Heart right ventricle (tissue), 16 donors: ENCODE measurements at regions of chr12 and their contacts with region 1.

Region 1: DNA sequence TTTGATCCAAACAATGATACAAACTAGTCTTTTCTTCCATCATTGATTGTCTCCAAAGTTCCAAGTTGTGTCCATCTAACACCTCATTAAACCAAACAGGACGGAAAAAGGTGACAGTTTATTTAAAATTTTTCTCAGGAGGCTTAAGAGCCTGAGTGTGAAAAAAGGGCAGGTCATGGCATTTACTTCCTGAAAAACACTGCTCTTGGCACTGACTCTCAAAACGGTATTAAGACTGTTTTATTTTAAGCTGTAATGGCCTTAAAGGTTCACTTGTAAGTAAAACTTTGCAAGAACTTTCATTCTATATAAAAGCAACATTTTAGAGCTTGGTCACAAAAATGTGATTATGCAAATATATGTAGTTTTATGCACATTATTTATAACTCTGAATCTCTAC is 222.5 kb downstream of the SLC2A13 start:
- DNase-seq: no peak
- ATAC-seq: no peak
- H3K4me3 ChIP-seq: no peak overlapping the region
- H3K27ac ChIP-seq: no peak overlapping the region
- H3K4me1 ChIP-seq: no peaks in the 10 kb centered on the region
- H3K27me3 ChIP-seq: no peaks in the 10 kb centered on the region
- CTCF ChIP-seq: no peak

Region 2: DNA sequence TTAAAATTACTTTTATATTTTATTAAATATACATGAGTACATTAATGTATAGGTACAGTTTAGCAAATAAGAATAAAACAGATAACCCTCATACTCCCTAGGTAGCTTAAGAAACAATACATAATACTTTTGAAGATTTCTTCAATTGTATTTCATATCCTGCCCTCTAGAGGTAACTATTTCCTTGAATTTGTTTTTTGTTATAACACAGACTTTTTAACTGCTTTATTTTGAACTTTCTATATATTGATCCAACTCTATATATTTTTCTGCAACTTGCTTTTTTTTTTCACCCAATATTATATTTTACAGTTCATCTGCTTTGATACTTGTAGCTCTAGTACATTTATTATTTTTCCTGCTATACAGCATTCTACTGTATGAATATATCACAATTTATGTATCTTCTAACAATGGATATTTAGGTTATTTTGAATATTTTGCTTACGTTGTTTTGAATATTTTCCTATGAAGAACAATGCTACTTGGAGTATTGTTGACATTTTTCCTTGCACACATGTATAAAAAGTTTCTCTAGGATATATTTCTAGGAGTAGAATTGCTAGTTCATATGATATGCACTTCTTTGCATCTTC is 191.1 kb before region 1 on chr12:
- intact Hi-C with region 1: no loop called
- DNase-seq: no peak
- ATAC-seq: no peak
- H3K4me3 ChIP-seq: no peak overlapping the region
- H3K27ac ChIP-seq: no peak overlapping the region
- H3K4me1 ChIP-seq: no peaks in the 10 kb centered on the region
- H3K27me3 ChIP-seq: no peaks in the 10 kb centered on the region
- CTCF ChIP-seq: peak in 8 of 9 donors; percentile 12 to 62 (median 41)

Region 3: DNA sequence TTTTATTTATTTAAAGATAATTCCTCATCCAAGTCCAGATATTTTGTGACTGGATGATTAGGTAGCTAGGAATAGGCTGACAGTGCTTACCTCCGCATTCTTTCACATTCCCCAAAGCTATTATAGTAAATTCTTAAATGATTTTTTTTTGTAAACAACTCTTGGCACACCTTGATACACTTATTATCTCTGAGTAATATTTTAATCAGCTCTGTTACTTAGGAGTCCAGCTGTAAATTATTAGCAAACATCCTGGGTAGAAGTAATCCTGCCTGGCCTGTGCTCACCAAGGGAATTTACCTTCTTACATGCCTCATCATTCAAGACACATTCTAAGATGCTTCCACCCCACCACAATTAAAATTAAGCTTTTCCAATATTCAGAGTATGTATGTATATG is 36.4 kb after region 1 on chr12:
- intact Hi-C with region 1: loop called in 1 of 10 experiments (anchors 5 kb)
- DNase-seq: no peak
- ATAC-seq: no peak
- H3K4me3 ChIP-seq: no peak overlapping the region
- H3K27ac ChIP-seq: no peak overlapping the region
- H3K4me1 ChIP-seq: peaks cover 0 to 5% (median 0%) of the 10 kb centered on the region in 9 donors
- H3K27me3 ChIP-seq: no peaks in the 10 kb centered on the region
- CTCF ChIP-seq: no peak

Region 4: DNA sequence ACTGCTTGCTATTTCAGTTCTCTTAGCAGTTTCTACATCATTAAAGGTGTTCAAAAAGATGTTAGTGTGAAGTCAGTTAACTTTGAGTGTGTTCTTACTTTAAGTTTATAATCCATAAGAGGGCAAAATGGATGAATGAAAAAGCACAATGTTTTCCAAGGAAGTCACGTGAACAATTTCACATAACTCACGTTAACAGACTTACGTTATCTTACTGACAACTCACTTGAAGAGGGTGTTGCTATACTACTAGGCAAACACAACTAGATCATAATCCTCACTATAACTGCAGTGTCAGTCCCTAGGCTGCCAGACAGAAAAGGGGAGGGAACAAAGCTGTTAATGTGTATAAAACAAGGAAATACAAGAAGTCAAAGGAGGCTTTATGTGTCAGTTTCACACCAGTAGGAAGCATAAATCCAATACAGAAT is 216.0 kb after region 1 on chr12:
- intact Hi-C with region 1: no loop called
- DNase-seq: no peak
- ATAC-seq: peak in 3 of 8 donors; percentile 37 to 91 (median 78)
- H3K4me3 ChIP-seq: no peak overlapping the region
- H3K27ac ChIP-seq: no peak overlapping the region
- H3K4me1 ChIP-seq: peaks cover 0 to 29% (median 19%) of the 10 kb centered on the region in 9 donors
- H3K27me3 ChIP-seq: no peaks in the 10 kb centered on the region
- CTCF ChIP-seq: no peak